ENCODE measurements at regions of chr7 and their contacts with region 1.

Region 1: GRCh38 chr7:124784879-124785818 is 19.6 kb upstream of the GPR37 start:
- DNase-seq: peak; percentile 40
- ATAC-seq: peak; percentile 75 to 84

Region 2: DNA sequence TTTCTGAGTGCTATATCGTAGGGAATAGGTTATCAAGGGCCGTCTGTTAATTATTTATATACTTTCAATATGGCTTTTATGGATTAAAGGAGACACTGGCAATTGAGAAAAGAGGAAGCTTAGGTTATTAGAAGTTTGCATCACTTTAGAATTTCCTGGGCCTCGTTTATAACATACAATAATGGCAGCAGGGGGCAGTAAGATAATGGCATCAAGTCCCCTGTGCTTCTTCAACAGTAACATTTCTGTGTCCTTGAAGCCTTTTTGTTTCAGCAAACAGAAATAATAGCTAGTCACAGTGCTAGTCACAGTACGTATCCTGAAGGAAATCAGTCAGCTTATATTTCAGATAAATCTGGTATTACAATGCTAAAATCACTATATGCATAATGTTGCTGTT is 818.2 kb before region 1 on chr7:
- intact Hi-C with region 1: loop called in 1 of 2 experiments (anchors 10 kb)
- DNase-seq: no peak
- ATAC-seq: peak in 1 of 2 donors; percentile 61

Region 3: DNA sequence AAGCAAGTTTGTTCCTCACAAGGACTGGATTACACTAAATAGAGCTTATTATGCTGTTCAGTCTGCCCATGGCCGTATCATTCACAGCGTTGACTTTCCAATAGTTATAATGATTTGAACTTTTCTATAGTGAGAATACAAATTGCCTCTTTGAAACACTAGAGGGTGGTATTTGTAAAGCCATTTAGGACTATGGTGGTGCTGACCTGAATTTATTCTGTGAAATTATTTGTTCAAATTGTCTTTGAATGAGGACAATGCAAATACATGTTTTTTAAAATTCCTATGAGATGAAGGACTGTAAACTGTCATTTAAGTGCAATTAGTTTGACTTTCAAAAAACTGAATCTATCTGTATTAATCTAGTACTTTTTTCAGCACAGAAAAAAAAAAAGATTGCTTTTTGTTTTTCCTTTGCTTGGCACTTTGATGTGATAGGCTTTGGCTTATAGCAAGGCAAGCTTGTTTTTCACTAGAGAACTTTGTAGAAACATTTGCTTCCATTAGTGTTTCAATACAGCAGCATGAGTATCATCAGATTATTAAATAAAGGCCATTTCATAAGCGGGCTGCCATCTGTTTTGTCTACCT is 629.6 kb before region 1 on chr7:
- intact Hi-C with region 1: loop called (anchors 5 to 10 kb)
- DNase-seq: no peak
- ATAC-seq: no peak

Region 4: GRCh38 chr7:124171068-124171467 is 614.1 kb before region 1 on chr7:
- intact Hi-C with region 1: loop called (anchors 2 to 10 kb)
- DNase-seq: no peak
- ATAC-seq: no peak

Region 5: DNA sequence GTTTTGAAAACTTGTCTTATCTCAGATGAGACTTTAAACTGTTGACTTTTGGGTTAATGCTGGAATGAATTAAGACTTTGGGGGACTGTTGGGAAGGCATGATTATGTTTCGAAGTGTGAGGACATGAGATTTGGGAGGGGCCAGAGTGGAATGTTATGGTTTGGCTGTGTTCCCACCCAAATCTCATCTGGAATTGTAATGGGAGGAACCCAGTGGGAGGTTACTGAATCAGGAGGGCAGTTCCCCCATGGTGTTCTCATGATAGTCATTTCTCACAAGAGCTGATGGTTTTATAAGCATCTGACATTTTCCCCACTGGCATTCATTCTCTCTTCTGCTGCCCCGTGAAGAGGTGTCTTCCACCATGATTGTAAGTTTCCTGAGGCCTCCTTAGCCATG is 158.3 kb after region 1 on chr7:
- intact Hi-C with region 1: no loop called
- DNase-seq: no peak
- ATAC-seq: no peak